Dorsolateral prefrontal cortex (tissue), 120 donors: ENCODE measurements at regions of chr1 and their contacts with region 1.

Region 1: DNA sequence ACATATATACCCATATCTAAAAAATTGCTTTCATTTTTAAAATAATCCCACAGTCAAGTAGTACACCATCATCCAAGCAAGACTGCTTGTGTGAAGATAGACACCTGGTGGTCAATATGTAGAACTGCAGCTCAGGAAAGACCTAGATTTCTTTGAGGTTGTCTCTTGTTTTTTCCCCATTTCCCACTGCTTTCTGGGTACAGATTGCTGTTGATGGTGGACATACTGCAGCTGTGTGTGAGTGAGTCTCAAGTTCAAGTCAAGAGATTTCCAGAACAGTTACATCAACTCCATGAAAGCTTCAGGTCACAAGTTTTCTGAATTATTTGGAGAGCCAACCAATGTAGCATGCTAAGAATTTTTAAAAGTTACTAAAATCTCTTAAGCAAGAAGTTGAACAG is 306.4 kb downstream of the DUSP10 start:
- DNase-seq: no peak
- H3K4me3 ChIP-seq: no peak overlapping the region
- H3K27ac ChIP-seq: no peak overlapping the region
- H3K27me3 ChIP-seq: peaks cover 0 to 2% (median 0%) of the 10 kb centered on the region in 45 donors
- CTCF ChIP-seq: peak; percentile 88 to 100 (median 98)

Region 2: GRCh38 chr1:220803401-220804201 is 631.9 kb before region 1 on chr1:
- intact Hi-C with region 1: loop called in 1 of 2 experiments (anchors 10 kb)
- DNase-seq: no peak
- H3K4me3 ChIP-seq: no peak overlapping the region
- H3K27ac ChIP-seq: no peak overlapping the region
- H3K27me3 ChIP-seq: no peaks in the 10 kb centered on the region
- CTCF ChIP-seq: peak; percentile 55 to 89 (median 77)

Region 3: GRCh38 chr1:220873868-220874655 is 561.4 kb before region 1 on chr1:
- intact Hi-C with region 1: loop called (anchors 5 to 10 kb)
- DNase-seq: peak in 1 of 10 donors; percentile 43
- H3K4me3 ChIP-seq: no peak overlapping the region
- H3K27ac ChIP-seq: no peak overlapping the region
- H3K27me3 ChIP-seq: peaks cover 0 to 36% (median 13%) of the 10 kb centered on the region in 45 donors
- CTCF ChIP-seq: peak; percentile 44 to 89 (median 71)

Region 4: GRCh38 chr1:220879076-220879508 is 556.4 kb before region 1 on chr1 and contains the start of gene HLX:
- intact Hi-C with region 1: loop called (anchors 5 to 10 kb)
- DNase-seq: peak in 6 of 10 donors; percentile 41 to 68 (median 53)
- H3K4me3 ChIP-seq: peak within 1 kb of the TSS; percentile 45 to 87 (median 75)
- H3K27ac ChIP-seq: peak within 1 kb of the TSS in 53 of 59 donors; percentile 29 to 92 (median 80)
- H3K27me3 ChIP-seq: peaks cover 0 to 63% (median 27%) of the 10 kb centered on the region in 45 donors
- CTCF ChIP-seq: peak in 1 of 56 donors; percentile 8
- total RNA-seq, gene HLX: 0.25 to 5.3 (median 1.6) TPM

Region 5: DNA sequence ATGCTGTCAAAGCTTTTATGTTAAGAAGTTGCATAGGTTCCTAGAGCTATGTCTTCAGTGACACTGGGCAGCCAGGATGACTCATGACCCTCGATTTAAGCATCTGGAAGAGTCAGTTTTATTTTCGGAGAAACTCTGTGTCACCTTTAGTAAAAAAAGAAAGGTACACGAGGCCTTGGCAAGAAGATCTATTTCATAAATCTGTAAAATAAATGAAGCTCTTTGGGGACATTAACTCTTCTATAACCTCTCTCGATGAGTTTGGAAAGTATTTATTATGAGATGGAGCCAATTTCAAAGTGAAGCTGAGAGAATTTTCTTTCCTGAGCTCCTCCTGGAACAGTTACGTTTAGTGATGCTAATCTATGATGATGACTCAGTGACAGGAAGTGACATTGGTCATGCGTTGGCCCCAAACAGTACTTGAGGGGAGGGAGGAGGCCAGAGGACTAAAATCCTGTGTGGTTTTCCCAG is 399.8 kb before region 1 on chr1:
- intact Hi-C with region 1: no loop called
- DNase-seq: no peak
- H3K4me3 ChIP-seq: no peak overlapping the region
- H3K27ac ChIP-seq: no peak overlapping the region
- H3K27me3 ChIP-seq: peaks cover 0 to 7% (median 0%) of the 10 kb centered on the region in 45 donors
- CTCF ChIP-seq: no peak

Region 6: GRCh38 chr1:221263831-221264767 is 171.4 kb before region 1 on chr1:
- intact Hi-C with region 1: loop called (anchors 1 to 5 kb)
- DNase-seq: peak in 8 of 10 donors; percentile 6 to 79 (median 54)
- H3K4me3 ChIP-seq: no peak overlapping the region
- H3K27ac ChIP-seq: peak overlapping the region in 1 of 59 donors; percentile 28
- H3K27me3 ChIP-seq: no peaks in the 10 kb centered on the region
- CTCF ChIP-seq: peak; percentile 31 to 86 (median 73)

Region 7: DNA sequence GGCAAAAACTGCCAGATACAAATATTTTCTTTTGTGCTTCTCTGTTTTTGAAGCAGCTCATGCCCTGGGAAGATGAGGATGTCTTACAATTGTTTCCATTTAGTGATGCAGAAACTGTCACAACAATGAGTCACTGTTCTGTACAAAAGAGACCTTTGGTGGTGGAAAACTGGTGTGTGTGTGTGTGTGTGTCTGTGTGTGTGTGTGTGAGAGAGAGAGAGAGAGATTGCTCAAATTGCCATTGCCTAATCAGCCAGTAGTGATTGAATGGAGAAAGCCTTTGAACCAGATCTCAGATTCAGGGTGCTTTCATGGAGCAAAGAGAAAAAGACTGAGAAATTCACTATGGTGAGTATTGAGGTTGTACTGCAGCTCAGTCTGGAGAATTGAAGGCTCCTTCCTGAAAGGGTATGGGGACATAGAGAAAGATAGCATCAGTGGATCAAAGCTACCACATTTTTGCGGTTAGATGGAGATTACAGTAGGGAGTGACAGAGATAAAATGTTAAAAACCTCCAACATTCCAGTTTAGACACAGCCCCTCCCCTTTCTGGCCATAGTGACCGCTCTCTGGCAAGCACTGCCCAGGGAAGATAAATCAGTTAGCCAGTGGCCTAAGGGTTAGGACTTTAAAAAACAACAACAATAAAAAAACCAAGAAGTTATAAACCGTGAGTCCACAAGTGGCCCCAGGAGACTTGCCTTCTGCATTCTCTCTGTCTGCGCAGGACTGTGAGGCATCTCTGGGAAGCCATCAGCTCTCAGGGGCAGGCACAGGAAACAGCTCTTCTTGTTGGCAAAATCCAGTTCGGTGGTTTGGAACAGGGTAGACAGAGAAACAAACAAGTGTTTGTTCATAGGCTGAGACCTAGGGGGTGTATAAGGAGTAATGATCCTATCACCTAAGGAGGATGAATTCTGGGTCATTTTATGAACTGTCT is 100.1 kb before region 1 on chr1:
- intact Hi-C with region 1: loop called (anchors 5 to 10 kb)
- DNase-seq: peak in 3 of 10 donors; percentile 12 to 43 (median 40)
- H3K4me3 ChIP-seq: peak overlapping the region in 35 of 59 donors; percentile 1 to 54 (median 30)
- H3K27ac ChIP-seq: peak overlapping the region; percentile 33 to 97 (median 90)
- H3K27me3 ChIP-seq: peaks cover 0 to 7% (median 0%) of the 10 kb centered on the region in 45 donors
- CTCF ChIP-seq: peak in 2 of 56 donors; percentile 7 to 9